ENCODE measurements at regions of chr2 and their contacts with region 1.

Region 1: DNA sequence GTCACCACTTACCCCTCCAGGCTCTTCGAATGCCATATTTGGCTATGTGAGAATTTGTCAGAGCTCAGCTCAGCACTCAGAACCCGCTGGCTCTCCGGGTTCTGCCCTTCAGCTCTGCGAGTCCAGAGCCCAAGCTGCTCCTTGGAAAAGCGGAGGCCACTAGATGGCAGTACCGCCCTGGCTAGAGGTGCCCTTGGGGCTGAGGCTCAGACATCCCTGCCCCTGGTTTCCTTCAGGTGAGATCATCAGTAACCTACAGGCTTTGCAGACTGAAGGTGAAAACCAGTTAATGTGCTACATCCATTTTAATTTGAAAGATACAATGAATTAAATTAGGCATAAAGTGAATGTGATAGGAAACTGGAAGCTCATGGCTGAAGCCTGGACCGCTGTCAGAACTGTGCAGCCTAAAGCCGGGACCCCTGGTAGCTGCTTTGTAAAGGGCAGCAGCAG is 285.6 kb downstream of the AGAP1 start:
- DNase-seq: peak; percentile 74
- H3K4me3 ChIP-seq: no peak overlapping the region
- H3K27ac ChIP-seq: no peak overlapping the region
- H3K4me1 ChIP-seq: no peaks in the 10 kb centered on the region
- H3K27me3 ChIP-seq: no peaks in the 10 kb centered on the region
- CTCF ChIP-seq: peak; percentile 89 to 90
- POLR2A ChIP-seq: no peak

Region 2: GRCh38 chr2:235238537-235238936 is 540.9 kb before region 1 on chr2:
- CTCF ChIA-PET with region 1: no interaction called
- POLR2A ChIA-PET with region 1: no interaction called
- dilution Hi-C with region 1: no loop called
- intact Hi-C with region 1: no loop called
- DNase-seq: peak; percentile 86
- H3K4me3 ChIP-seq: no peak overlapping the region
- H3K27ac ChIP-seq: peak overlapping the region; percentile 19
- H3K4me1 ChIP-seq: peaks cover 12% of the 10 kb centered on the region
- H3K27me3 ChIP-seq: no peaks in the 10 kb centered on the region
- CTCF ChIP-seq: no peak
- POLR2A ChIP-seq: no peak

Region 3: DNA sequence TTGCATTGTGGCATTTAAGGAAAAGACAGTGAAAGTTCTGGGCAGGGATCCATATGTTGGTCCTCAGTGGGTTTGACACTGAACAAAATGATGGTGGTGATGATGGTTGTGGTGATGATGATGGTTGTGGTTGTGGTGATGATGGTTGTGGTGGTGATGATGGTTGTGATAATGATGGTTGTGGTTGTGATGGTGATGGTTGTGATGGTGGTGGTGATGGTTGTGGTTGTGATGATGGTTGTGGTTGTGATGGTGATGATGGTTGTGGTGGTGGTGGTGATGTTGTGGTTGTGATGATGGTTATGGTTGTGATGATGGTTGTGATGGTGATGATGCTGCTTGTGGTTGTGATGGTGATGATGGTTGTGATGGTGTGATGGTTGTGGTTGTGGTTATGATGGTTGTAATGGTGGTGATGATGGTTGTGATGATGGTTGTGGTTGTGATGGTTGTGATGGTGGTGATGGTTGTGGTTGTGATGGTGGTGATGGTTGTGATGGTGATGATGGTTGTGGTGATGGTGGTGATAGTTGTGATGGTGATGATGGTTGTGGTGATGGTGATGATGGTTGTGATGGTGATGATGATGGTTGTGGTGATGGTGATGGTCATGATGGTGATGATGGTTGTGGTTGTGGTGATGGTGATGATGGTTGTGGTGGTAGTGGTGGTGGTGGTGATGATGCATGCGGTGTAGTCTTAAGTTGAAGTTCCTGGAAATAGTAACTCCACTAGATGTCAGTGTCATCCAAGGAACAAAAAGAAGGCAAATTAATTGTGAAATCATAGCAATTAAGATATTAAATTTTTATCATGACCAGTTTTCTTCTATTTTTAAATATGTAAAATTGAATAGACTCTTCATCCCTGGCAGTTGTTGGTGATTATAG is 23.3 kb after region 1 on chr2:
- CTCF ChIA-PET with region 1: interaction called, 10 read pairs
- POLR2A ChIA-PET with region 1: no interaction called
- dilution Hi-C with region 1: no loop called
- intact Hi-C with region 1: loop called (anchors 2 kb)
- DNase-seq: peak; percentile 43
- H3K4me3 ChIP-seq: no peak overlapping the region
- H3K27ac ChIP-seq: no peak overlapping the region
- H3K4me1 ChIP-seq: no peaks in the 10 kb centered on the region
- H3K27me3 ChIP-seq: no peaks in the 10 kb centered on the region
- CTCF ChIP-seq: peak; percentile 9 to 18
- POLR2A ChIP-seq: no peak

Region 4: DNA sequence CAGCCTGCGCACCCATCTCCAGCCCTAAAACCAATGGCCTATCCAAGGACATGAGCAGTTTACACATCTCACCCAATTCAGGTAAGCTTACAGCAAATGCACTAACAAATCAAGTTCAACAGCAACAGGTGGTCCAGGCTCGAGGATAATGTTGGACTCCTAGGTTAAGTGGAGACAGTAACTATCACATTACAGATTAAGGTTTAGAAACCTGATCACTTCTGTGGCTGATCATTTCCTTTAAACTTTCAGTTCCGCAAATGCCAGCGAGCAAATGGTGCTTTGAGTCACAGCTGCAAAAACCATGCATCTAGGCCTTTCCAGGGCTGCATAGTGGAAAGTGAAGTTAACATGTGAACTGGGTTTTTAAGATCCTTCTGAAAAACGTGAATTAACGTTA is 129.4 kb after region 1 on chr2:
- CTCF ChIA-PET with region 1: no interaction called
- POLR2A ChIA-PET with region 1: no interaction called
- dilution Hi-C with region 1: no loop called
- intact Hi-C with region 1: no loop called
- DNase-seq: no peak
- H3K4me3 ChIP-seq: no peak overlapping the region
- H3K27ac ChIP-seq: no peak overlapping the region
- H3K4me1 ChIP-seq: no peaks in the 10 kb centered on the region
- H3K27me3 ChIP-seq: no peaks in the 10 kb centered on the region
- CTCF ChIP-seq: no peak
- POLR2A ChIP-seq: no peak

Region 5: GRCh38 chr2:235981631-235982030 is 202.2 kb after region 1 on chr2:
- CTCF ChIA-PET with region 1: interaction called, 4 read pairs
- POLR2A ChIA-PET with region 1: no interaction called
- dilution Hi-C with region 1: no loop called
- intact Hi-C with region 1: loop called (anchors 1 kb)
- DNase-seq: peak; percentile 34
- H3K4me3 ChIP-seq: no peak overlapping the region
- H3K27ac ChIP-seq: no peak overlapping the region
- H3K4me1 ChIP-seq: no peaks in the 10 kb centered on the region
- H3K27me3 ChIP-seq: no peaks in the 10 kb centered on the region
- CTCF ChIP-seq: peak in 1 of 2 donors; percentile 34
- POLR2A ChIP-seq: no peak

Region 6: DNA sequence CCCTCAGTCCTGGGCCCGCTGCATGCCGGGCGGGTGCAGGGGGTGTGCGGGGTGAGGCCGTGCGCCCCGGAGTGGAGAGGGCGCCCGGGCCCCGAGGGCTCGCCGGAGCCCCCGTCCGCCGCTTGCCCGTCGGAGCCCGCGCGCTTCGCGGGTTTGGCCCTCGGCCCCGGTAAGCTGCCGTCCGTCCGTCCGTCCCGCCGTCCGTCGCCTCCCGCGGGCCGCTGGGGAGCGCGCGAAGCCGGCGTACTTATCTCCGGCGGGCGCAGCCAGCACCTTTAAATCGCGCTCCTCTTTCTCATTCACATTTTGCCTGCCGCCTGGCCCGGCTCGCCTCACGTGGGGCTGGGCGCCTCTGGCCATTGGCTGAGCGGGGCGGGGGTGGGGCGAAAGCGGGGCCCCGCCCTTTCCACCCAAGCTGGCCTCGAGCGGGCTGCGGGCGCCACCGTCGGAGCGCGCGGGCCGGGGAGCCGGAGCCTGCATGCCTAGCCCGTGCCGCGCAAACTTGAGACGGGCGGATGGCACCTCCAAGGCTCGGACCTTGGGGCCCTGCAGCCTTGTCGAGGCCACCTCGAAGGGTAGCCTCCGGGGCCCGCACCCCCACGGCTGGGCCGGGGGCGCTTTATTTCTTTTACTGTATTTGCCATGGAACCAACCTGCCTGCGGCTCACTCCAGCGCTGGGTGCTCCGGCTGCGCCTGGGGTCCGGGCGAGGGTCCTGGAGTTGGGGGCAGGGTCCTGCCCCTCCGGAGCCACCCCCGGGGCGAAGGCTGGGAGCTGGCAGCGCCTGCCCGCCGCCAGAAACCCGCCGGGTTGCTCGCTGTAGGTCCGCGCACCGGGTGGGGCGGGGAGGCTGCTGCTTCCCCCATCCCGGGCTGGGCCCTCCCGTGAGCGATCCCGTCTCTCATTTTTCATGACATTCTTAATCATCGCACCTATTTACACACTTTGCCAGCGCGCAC is 388.9 kb after region 1 on chr2 and contains the start of gene GBX2:
- CTCF ChIA-PET with region 1: interaction called, 15 read pairs
- POLR2A ChIA-PET with region 1: no interaction called
- dilution Hi-C with region 1: no loop called
- intact Hi-C with region 1: no loop called
- DNase-seq: peak; percentile 92
- H3K4me3 ChIP-seq: peak within 1 kb of the TSS; percentile 59 to 73 (median 68)
- H3K27ac ChIP-seq: peak within 1 kb of the TSS; percentile 11
- H3K4me1 ChIP-seq: peaks cover 25% of the 10 kb centered on the region
- H3K27me3 ChIP-seq: peaks cover 3 to 48% of the 10 kb centered on the region in 2 experiments
- CTCF ChIP-seq: no peak
- POLR2A ChIP-seq: peak; percentile 77
- total RNA-seq, gene GBX2: 3.6 TPM in 2 replicates

Region 7: DNA sequence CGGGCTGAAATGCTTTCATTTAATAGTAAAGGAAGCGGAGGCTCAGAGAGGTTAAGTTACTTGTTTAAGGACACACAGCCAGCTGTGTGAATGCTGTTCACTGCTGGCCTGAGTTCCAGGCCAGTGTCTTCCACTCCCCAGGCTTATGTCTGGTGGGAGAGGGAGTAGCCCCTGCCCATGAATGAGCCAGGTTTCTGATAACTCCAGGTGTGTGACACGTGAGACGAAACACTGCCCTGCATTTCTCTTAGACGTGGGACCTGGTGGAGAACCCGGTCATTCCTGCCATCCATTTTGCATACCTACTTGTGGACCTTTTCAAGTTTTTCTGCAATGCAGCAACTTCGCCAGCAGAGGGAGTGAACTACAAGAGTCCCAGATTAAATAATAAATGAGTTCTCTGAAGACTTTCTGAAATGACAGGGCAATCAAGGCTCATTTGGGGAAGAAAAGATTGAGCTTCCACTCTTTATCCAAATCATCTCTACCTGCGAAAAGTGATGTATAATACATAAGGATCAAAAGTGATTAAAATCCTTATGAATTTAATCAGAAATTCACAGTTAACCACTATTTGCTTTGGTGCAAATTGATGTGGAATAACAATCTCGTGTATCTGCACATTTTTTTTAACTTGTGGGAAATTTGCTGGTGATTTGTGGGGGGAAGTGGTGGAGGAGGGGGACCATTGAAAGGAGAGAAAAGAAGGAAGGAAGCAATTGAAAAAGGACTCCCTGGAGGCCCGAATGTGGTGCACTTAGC is 564.1 kb after region 1 on chr2:
- CTCF ChIA-PET with region 1: interaction called, 5 read pairs
- POLR2A ChIA-PET with region 1: no interaction called
- dilution Hi-C with region 1: no loop called
- intact Hi-C with region 1: loop called (anchors 2 kb)
- DNase-seq: peak; percentile 65
- H3K4me3 ChIP-seq: no peak overlapping the region
- H3K27ac ChIP-seq: no peak overlapping the region
- H3K4me1 ChIP-seq: no peaks in the 10 kb centered on the region
- H3K27me3 ChIP-seq: no peaks in the 10 kb centered on the region
- CTCF ChIP-seq: peak; percentile 72 to 78
- POLR2A ChIP-seq: no peak